Activated CD8-positive, alpha-beta T cell treated with anti-CD3 and anti-CD28 coated beads for 36 hours (primary cell): ENCODE measurements at regions of chr11 and their contacts with region 1.

Region 1: GRCh38 chr11:57493507-57494503 is 21.7 kb downstream of the SLC43A1 start:
- DNase-seq: peak; percentile 88
- ATAC-seq: peak; percentile 90
- H3K4me3 Mint-ChIP-seq: no peak overlapping the region
- H3K27ac Mint-ChIP-seq: peak overlapping the region; percentile 96
- H3K4me1 Mint-ChIP-seq: peaks cover 13% of the 10 kb centered on the region
- H3K27me3 Mint-ChIP-seq: no peaks in the 10 kb centered on the region
- CTCF ChIP-seq: peak; percentile 90

Region 2: GRCh38 chr11:57426929-57427726 is 66.7 kb before region 1 on chr11 and contains the start of gene SLC43A3:
- CTCF ChIA-PET with region 1: interaction called, 13 read pairs
- POLR2A ChIA-PET with region 1: interaction called, 3 read pairs
- intact Hi-C with region 1: no loop called
- DNase-seq: peak; percentile 85
- ATAC-seq: peak; percentile 74
- H3K4me3 Mint-ChIP-seq: peak within 1 kb of the TSS; percentile 92
- H3K27ac Mint-ChIP-seq: peak within 1 kb of the TSS; percentile 95
- H3K4me1 Mint-ChIP-seq: peaks cover 34% of the 10 kb centered on the region
- H3K27me3 Mint-ChIP-seq: no peaks in the 10 kb centered on the region
- CTCF ChIP-seq: no peak
- total RNA-seq, gene SLC43A3: 294 to 300 TPM

Region 3: GRCh38 chr11:57508341-57509170 is 14.8 kb after region 1 on chr11:
- CTCF ChIA-PET with region 1: interaction called, 126 read pairs
- POLR2A ChIA-PET with region 1: interaction called, 17 read pairs
- intact Hi-C with region 1: no loop called
- DNase-seq: no peak
- ATAC-seq: no peak
- H3K4me3 Mint-ChIP-seq: no peak overlapping the region
- H3K27ac Mint-ChIP-seq: no peak overlapping the region
- H3K4me1 Mint-ChIP-seq: peaks cover 25% of the 10 kb centered on the region
- H3K27me3 Mint-ChIP-seq: no peaks in the 10 kb centered on the region
- CTCF ChIP-seq: no peak

Region 4: GRCh38 chr11:57523419-57523818 is 29.6 kb after region 1 on chr11:
- CTCF ChIA-PET with region 1: interaction called, 425 read pairs
- POLR2A ChIA-PET with region 1: interaction called, 10 read pairs
- intact Hi-C with region 1: loop called (anchors 2 kb)
- DNase-seq: no peak
- ATAC-seq: no peak
- H3K4me3 Mint-ChIP-seq: no peak overlapping the region
- H3K27ac Mint-ChIP-seq: no peak overlapping the region
- H3K4me1 Mint-ChIP-seq: peaks cover 12% of the 10 kb centered on the region
- H3K27me3 Mint-ChIP-seq: no peaks in the 10 kb centered on the region
- CTCF ChIP-seq: no peak

Region 5: GRCh38 chr11:57588046-57588710 is 94.4 kb after region 1 on chr11:
- CTCF ChIA-PET with region 1: no interaction called
- POLR2A ChIA-PET with region 1: no interaction called
- intact Hi-C with region 1: no loop called
- DNase-seq: no peak
- ATAC-seq: no peak
- H3K4me3 Mint-ChIP-seq: no peak overlapping the region
- H3K27ac Mint-ChIP-seq: no peak overlapping the region
- H3K4me1 Mint-ChIP-seq: peaks cover 6% of the 10 kb centered on the region
- H3K27me3 Mint-ChIP-seq: peaks cover 3% of the 10 kb centered on the region
- CTCF ChIP-seq: no peak

Region 6: DNA sequence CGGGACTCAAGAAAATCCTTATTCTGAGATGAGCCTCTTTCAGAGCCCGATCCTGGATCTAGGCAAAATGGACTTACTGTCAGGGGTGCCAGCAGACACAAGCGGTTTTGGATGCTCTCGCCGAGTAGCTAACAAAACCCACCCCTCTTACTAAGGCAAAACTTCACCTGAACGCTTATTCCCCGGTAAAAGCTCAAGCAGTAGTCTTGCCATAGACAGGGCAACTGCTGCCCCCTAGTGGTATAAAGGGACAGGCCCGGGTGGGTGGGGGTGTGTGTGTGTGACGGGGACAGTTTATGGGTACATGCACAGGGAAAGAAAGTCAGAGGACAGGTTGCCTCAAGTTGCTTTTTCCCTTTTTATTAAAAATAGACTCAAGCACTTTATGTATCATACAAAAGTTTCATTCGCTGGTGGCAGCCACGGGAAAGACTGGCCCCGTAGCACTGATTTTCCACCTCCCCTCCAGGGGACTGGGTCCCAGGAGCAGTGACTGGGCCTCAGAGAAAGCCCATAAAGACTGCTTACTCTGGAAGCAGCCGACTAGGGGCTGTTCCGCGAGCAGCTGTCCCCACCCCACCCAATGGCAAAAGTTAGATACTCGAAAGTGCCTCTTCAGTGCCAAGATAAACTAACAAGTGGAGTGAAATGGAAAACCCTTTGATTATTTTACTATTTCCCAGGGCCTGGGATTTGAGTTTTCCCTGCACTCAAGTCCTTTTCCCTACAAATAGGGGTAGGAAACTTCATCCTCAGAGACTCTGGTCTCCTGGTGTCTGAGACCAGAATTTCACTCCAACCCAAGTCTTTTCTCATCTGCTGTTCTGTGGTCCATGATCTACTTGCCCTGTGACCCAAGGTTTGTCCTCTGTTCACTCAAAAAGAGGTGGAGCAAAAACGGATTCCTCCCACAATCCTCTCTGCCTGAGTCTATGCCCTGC is 151.2 kb after region 1 on chr11:
- CTCF ChIA-PET with region 1: interaction called, 39 read pairs
- POLR2A ChIA-PET with region 1: no interaction called
- intact Hi-C with region 1: no loop called
- DNase-seq: peak; percentile 93
- ATAC-seq: peak; percentile 71
- H3K4me3 Mint-ChIP-seq: no peak overlapping the region
- H3K27ac Mint-ChIP-seq: no peak overlapping the region
- H3K4me1 Mint-ChIP-seq: peaks cover 36% of the 10 kb centered on the region
- H3K27me3 Mint-ChIP-seq: peaks cover 48% of the 10 kb centered on the region
- CTCF ChIP-seq: peak; percentile 78

Region 7: DNA sequence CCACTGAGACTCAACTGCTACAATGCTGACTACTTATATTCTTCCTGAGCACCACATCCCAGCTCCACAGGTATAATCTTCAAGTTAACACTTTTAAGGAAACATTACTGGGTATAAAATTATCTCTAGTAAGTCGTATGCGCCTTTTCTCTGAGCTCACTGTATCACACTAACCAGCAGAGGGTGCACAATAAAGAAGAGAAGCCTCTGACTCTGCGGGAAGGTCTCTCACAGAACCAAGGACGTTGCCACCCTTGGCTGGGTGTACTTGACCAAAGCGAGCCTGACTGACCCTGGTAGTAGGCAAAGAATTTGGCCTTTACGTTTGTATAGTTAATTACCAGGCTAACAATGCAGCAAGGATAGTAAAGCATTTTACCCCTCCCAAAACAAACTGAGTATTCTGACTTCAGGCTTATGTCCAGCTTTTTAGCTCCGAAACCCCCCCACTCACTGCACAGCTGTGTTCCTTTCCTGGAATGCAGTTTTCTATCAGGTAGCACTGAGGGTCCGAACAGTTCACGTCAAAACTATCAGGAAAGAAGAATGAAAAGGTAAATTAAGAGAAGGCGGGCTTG is 258.0 kb after region 1 on chr11 and contains the start of gene BTBD18:
- CTCF ChIA-PET with region 1: no interaction called
- POLR2A ChIA-PET with region 1: no interaction called
- intact Hi-C with region 1: no loop called
- DNase-seq: no peak
- ATAC-seq: peak; percentile 64
- H3K4me3 Mint-ChIP-seq: no peak within 1 kb of the TSS
- H3K27ac Mint-ChIP-seq: peak within 1 kb of the TSS; percentile 53
- H3K4me1 Mint-ChIP-seq: peaks cover 5% of the 10 kb centered on the region
- H3K27me3 Mint-ChIP-seq: no peaks in the 10 kb centered on the region
- CTCF ChIP-seq: peak; percentile 25
- total RNA-seq, gene BTBD18: not detected

Region 8: DNA sequence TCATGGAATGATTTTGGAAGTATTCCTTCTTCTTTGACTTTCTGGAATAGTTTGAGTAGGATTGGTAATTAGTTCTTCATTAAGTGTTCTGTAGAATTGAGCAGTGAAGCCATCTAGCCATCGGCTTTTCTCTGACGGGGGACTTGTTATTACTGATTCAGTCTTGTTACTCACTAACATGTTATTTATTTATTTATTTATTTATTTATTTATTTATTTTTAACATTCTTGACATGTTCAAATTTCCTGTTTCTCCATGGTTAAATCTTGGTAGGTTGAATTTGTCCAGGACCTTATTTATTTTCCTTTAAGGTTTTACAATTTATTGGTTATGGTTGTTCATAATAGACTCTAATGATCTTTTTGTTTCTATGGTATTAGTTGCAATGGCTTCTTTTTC is 750.1 kb after region 1 on chr11:
- CTCF ChIA-PET with region 1: no interaction called
- POLR2A ChIA-PET with region 1: no interaction called
- intact Hi-C with region 1: no loop called
- DNase-seq: no peak
- ATAC-seq: no peak
- H3K4me3 Mint-ChIP-seq: no peak overlapping the region
- H3K27ac Mint-ChIP-seq: no peak overlapping the region
- H3K4me1 Mint-ChIP-seq: no peaks in the 10 kb centered on the region
- H3K27me3 Mint-ChIP-seq: peaks cover 15% of the 10 kb centered on the region
- CTCF ChIP-seq: no peak